H1 (cell line): ENCODE measurements at regions of chr19 and their contacts with region 1.

Region 1: DNA sequence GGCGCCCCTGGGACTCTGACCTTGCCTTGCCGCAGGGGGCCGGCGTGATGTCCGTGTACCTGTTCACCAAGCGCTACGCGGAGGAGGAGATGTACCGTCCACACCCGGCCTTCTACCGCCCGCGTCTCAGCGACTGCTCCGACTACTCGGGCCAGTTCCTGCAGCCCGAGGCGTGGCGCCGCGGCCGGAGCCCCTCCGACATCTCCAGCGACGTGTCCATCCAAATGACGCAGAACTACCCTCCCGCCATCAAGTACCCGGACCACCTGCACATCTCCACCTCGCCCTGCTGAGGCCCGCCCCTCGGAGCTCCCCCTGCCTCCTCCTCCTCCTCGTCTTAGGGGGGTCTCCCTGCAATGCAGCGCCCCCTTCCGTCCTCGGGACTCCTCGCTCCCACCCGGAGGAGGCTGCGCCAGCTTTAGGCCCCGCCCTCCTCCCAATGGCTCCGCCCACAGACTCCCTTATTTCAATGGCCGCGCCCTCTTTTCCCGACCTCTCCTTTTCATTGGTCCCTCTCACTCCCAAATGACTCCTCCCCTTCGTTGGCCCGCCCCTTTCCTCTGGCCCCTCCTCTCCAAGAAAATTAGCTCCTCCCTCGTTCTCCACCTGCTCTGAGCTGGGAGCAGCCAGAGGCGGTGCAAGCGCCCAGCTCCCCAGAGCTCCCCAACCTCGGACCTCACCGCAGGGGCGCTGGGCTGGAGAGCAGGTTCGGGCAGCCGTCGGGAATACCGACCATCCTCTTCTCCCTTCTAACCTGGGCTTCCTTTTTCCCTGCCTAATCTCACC is 20.5 kb upstream of the CACNG8 start:
- DNase-seq: peak; percentile 97 to 100
- H3K4me3 ChIP-seq: peak overlapping the region; percentile 76 to 95 (median 88)
- H3K27ac ChIP-seq: peak overlapping the region; percentile 63; the same call in 1 of the 2 replicates
- H3K4me1 ChIP-seq: peaks cover 4 to 10% (median 7%) of the 10 kb centered on the region in 4 experiments; a peak in 6 of 7 replicates
- H3K27me3 ChIP-seq: no peaks in the 10 kb centered on the region
- CTCF ChIP-seq: peak; percentile 60 to 86 (median 82)
- EP300 ChIP-seq: no peak
- POLR2A ChIP-seq: peak; percentile 55 to 88
- RAD21 ChIP-seq: peak; percentile 46 to 65

Region 2: DNA sequence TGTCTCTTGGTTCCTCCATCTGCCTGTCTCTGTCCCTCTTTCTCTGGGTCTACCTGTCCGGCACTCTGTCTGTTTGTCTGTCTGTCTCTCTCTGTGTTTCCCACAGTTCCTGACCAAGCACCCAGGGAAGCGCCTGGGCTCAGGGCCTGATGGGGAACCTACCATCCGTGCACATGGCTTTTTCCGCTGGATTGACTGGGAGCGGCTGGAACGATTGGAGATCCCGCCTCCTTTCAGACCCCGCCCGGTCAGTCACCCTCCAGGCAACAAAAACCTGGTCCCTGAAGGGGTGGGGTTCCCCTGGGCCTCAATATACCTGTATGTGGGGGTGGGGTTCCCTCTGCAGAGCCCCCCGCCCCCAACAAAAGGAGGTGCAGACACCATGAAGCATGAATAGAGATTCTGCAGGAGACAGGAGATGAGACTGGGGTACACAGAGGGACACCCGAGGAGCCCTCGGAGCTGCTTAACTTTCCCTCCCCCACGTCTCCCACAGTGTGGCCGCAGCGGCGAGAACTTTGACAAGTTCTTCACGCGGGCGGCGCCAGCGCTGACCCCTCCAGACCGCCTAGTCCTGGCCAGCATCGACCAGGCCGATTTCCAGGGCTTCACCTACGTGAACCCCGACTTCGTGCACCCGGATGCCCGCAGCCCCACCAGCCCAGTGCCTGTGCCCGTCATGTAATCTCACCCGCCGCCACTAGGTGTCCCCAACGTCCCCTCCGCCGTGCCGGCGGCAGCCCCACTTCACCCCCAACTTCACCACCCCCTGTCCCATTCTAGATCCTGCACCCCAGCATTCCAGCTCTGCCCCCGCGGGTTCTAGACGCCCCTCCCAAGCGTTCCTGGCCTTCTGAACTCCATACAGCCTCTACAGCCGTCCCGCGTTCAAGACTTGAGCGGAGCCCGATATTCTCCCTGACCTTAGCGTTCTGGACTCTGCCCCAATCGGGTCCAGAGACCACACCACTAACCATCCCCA is 35.7 kb before region 1 on chr19:
- CTCF ChIA-PET with region 1: interaction called, 52 read pairs
- POLR2A ChIA-PET with region 1: interaction called, 10 read pairs
- DNase-seq: peak in 1 of 2 experiments; percentile 97
- H3K4me3 ChIP-seq: peak overlapping the region; percentile 34 to 72 (median 44)
- H3K27ac ChIP-seq: no peak overlapping the region
- H3K4me1 ChIP-seq: peaks cover 0 to 14% (median 4%) of the 10 kb centered on the region in 4 experiments; a peak in 5 of 7 replicates
- H3K27me3 ChIP-seq: peaks cover 0 to 22% (median 14%) of the 10 kb centered on the region in 4 experiments; a peak in 5 of 7 replicates
- CTCF ChIP-seq: peak; percentile 72 to 97 (median 82)
- EP300 ChIP-seq: no peak
- POLR2A ChIP-seq: no peak
- RAD21 ChIP-seq: peak; percentile 68 to 75

Region 3: DNA sequence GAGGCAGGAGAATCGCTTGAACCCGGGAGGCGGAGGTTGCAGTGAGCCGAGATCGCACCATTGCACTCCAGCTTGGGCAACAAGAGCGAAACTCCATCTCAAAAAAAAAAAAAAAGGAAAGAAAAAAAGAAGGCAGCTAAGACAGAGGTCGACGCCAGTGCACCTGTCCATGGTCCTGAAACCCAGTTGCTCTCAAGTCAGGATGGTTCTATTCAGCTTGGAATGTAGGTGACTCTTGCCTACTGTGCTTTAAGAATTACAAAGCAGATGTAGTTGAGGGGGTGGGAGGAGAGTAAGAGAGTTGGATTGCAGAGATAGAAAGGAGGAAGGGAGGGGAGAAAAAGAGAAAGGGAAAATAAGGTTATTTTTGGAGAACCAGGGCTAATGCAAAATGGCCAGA is 14.5 kb before region 1 on chr19:
- CTCF ChIA-PET with region 1: interaction called, 18 read pairs
- POLR2A ChIA-PET with region 1: interaction called, 9 read pairs
- DNase-seq: peak; percentile 79 to 88
- H3K4me3 ChIP-seq: no peak overlapping the region
- H3K27ac ChIP-seq: no peak overlapping the region
- H3K4me1 ChIP-seq: peaks cover 0 to 2% (median 0%) of the 10 kb centered on the region in 4 experiments; a peak in 2 of 7 replicates
- H3K27me3 ChIP-seq: no peaks in the 10 kb centered on the region
- CTCF ChIP-seq: no peak
- EP300 ChIP-seq: peak in 1 of 2 experiments; percentile 59; a peak in 1 of 3 replicates
- POLR2A ChIP-seq: no peak
- RAD21 ChIP-seq: 0 out of 4 replicates have a peak, but pooled peaks of 1 of the 2 experiments have one; percentile 8

Region 4: DNA sequence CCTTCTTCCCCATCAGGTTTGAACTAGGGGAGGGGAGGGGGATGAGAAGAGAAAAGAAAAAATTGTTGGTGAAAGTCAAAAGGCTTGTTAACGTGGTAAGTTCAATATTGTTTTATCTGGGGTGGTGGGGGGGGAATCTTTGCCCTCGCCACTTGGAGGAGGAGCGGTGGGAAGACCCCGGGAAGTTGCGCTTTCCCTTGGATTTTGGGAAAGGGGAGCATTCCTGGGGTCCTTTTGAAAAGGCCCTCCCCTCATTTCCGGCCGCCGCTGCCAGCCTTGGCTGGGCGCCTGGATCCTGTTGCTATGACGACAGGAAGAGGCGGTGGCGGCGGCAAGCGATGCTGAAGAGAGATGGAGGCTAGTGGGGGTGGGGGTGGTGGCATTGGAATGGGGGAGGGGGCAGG is 16.0 kb after region 1 on chr19:
- CTCF ChIA-PET with region 1: interaction called, 23 read pairs
- POLR2A ChIA-PET with region 1: interaction called, 33 read pairs
- DNase-seq: peak in 1 of 2 experiments; percentile 83
- H3K4me3 ChIP-seq: peak overlapping the region; percentile 17 to 61 (median 34); a peak in 7 of 8 replicates
- H3K27ac ChIP-seq: peak overlapping the region; percentile 83
- H3K4me1 ChIP-seq: peaks cover 7 to 20% (median 16%) of the 10 kb centered on the region in 4 experiments
- H3K27me3 ChIP-seq: peaks cover 0 to 3% (median 1%) of the 10 kb centered on the region in 4 experiments; a peak in 2 of 7 replicates
- CTCF ChIP-seq: no peak
- EP300 ChIP-seq: no peak
- POLR2A ChIP-seq: no peak
- RAD21 ChIP-seq: no peak

Region 5: DNA sequence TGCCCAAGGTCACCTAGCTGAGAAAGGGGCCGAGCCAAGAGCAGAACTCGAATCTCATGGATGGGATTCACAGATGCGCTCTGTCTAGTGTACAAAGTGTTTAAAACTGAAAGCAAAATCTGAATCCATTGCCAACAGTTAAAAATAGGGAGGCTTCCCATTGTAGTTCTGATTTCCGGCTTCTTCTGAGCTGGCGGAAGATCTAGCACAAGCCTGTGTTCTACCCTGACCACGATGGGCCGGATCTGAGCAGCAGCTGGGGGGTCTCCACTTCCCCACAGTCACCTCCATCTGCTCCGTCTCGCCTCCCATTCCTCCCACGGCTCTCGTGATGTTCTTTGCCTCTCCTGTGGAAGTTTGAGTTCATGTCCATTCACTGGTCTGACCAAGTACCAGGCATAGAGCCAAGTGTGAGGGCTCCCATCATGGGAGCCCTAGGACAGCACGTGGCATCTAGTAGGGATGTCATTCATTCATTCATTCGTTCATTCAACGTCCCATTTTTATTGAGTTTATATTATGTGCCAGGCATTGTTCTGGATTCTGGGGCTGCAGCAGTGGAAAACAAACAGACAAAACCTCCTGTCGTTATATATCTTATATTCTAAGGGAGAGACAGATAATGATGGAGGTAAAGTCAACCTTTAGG is 23.0 kb after region 1 on chr19:
- CTCF ChIA-PET with region 1: interaction called, 23 read pairs
- POLR2A ChIA-PET with region 1: interaction called, 33 read pairs
- DNase-seq: no peak
- H3K4me3 ChIP-seq: no peak overlapping the region
- H3K27ac ChIP-seq: no peak overlapping the region
- H3K4me1 ChIP-seq: peaks cover 0 to 11% (median 3%) of the 10 kb centered on the region in 4 experiments; a peak in 5 of 7 replicates
- H3K27me3 ChIP-seq: peaks cover 0 to 3% (median 1%) of the 10 kb centered on the region in 4 experiments; a peak in 2 of 7 replicates
- CTCF ChIP-seq: no peak
- EP300 ChIP-seq: no peak
- POLR2A ChIP-seq: no peak
- RAD21 ChIP-seq: no peak